Activated CD4-positive, alpha-beta T cell treated with anti-CD3 and anti-CD28 coated beads for 36 hours (primary cell): ENCODE measurements at regions of chr1 and their contacts with region 1.

Region 1: GRCh38 chr1:172357753-172358385 is 62.6 kb upstream of the C1orf105 start:
- DNase-seq: no peak
- ATAC-seq: peak; percentile 6
- H3K4me3 Mint-ChIP-seq: peak overlapping the region; percentile 39
- H3K27ac Mint-ChIP-seq: peak overlapping the region; percentile 34
- H3K4me1 Mint-ChIP-seq: peaks cover 62% of the 10 kb centered on the region
- H3K27me3 Mint-ChIP-seq: peaks cover 2% of the 10 kb centered on the region

Region 2: DNA sequence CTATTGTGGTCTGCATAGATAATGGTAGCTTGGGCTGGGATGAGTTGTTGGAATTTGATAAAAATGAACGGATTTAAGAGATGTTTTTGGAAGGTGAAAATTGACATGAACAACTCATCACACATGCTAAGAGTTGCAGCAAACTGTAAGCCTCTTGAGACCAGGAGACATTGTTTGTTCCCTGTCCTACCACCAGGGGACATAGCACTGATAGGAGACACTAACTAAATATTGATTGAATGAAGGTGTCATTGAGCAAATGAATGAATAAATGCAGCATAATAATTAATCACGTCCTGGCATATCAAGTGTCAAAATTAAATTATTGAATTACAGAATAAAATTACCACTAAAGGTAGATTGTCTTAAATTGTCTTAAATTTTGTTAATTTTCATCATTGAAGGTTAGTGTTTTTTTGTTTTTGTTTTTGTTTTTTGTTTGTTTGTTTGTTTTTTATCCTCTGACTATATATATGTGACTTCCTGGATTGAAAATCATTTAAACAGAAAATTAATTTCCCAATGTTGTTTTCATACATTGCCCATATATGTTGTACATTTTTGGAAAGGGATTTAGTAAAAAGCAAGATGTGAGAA is 222.7 kb before region 1 on chr1:
- CTCF ChIA-PET with region 1: no interaction called
- POLR2A ChIA-PET with region 1: interaction called, 3 read pairs
- intact Hi-C with region 1: loop called in 1 of 2 experiments (anchors 1 kb)
- DNase-seq: peak; percentile 25
- ATAC-seq: no peak
- H3K4me3 Mint-ChIP-seq: no peak overlapping the region
- H3K27ac Mint-ChIP-seq: no peak overlapping the region
- H3K4me1 Mint-ChIP-seq: peaks cover 19% of the 10 kb centered on the region
- H3K27me3 Mint-ChIP-seq: no peaks in the 10 kb centered on the region

Region 3: DNA sequence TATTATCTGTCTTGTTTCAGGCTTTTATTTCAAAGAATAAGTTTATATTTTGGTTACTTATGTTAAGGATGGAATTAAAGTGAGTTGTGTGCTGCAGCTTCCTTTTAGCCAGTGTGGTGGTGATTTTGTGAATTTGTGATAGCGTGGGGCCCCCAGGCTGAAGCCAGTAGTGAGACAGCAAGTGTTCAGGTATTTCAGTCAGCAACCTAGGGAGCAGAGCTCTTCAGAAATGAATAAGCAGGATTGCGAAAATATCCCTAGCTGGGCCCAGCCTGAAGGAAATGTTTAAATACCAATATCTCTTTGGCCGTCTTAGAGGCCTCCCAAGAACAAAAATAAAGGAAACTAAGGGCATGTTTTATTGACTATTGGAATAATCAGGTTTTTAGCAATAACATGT is 88.2 kb before region 1 on chr1:
- CTCF ChIA-PET with region 1: interaction called, 3 read pairs
- POLR2A ChIA-PET with region 1: no interaction called
- intact Hi-C with region 1: loop called (anchors 1 to 2 kb)
- DNase-seq: peak; percentile 18
- ATAC-seq: peak; percentile 10
- H3K4me3 Mint-ChIP-seq: no peak overlapping the region
- H3K27ac Mint-ChIP-seq: peak overlapping the region; percentile 39
- H3K4me1 Mint-ChIP-seq: peaks cover 41% of the 10 kb centered on the region
- H3K27me3 Mint-ChIP-seq: no peaks in the 10 kb centered on the region

Region 4: GRCh38 chr1:172380441-172381244 is 22.8 kb after region 1 on chr1:
- CTCF ChIA-PET with region 1: interaction called, 9 read pairs
- POLR2A ChIA-PET with region 1: interaction called, 9 read pairs
- intact Hi-C with region 1: loop called in 1 of 2 experiments (anchors 2 kb)
- DNase-seq: peak; percentile 32
- ATAC-seq: peak; percentile 98
- H3K4me3 Mint-ChIP-seq: peak overlapping the region; percentile 43
- H3K27ac Mint-ChIP-seq: peak overlapping the region; percentile 91
- H3K4me1 Mint-ChIP-seq: peaks cover 31% of the 10 kb centered on the region
- H3K27me3 Mint-ChIP-seq: no peaks in the 10 kb centered on the region